CD4-positive, alpha-beta T cell (primary cell): ENCODE measurements at regions of chr2 and their contacts with region 1.

Region 1: GRCh38 chr2:127398239-127398590 is 10.4 kb upstream of the MAP3K2 start:
- DNase-seq: peak in 6 of 14 experiments; percentile 32 to 76 (median 54)
- ATAC-seq: peak; percentile 63
- H3K4me3 ChIP-seq: no peak overlapping the region
- H3K4me3 Mint-ChIP-seq: no peak overlapping the region
- H3K27ac ChIP-seq: no peak overlapping the region
- H3K27ac Mint-ChIP-seq: no peak overlapping the region
- H3K4me1 ChIP-seq: peaks cover 2% of the 10 kb centered on the region
- H3K4me1 Mint-ChIP-seq: no peaks in the 10 kb centered on the region
- H3K27me3 ChIP-seq: no peaks in the 10 kb centered on the region
- H3K27me3 Mint-ChIP-seq: no peaks in the 10 kb centered on the region
- CTCF ChIP-seq: no peak

Region 2: GRCh38 chr2:127072970-127073369 is 325.2 kb before region 1 on chr2:
- CTCF ChIA-PET with region 1: no interaction called
- POLR2A ChIA-PET with region 1: no interaction called
- intact Hi-C with region 1: loop called in 1 of 2 experiments (anchors 10 kb)
- DNase-seq: no peak
- ATAC-seq: no peak
- H3K4me3 ChIP-seq: no peak overlapping the region
- H3K4me3 Mint-ChIP-seq: no peak overlapping the region
- H3K27ac ChIP-seq: no peak overlapping the region
- H3K27ac Mint-ChIP-seq: peak overlapping the region; percentile 82
- H3K4me1 ChIP-seq: peaks cover 54% of the 10 kb centered on the region
- H3K4me1 Mint-ChIP-seq: peaks cover 49% of the 10 kb centered on the region
- H3K27me3 ChIP-seq: no peaks in the 10 kb centered on the region
- H3K27me3 Mint-ChIP-seq: no peaks in the 10 kb centered on the region
- CTCF ChIP-seq: no peak